ENCODE measurements at regions of chr3 and their contacts with region 1.

Region 1: GRCh38 chr3:156151824-156152428 is 31.5 kb downstream of the KCNAB1 start:
- DNase-seq: peak; percentile 85

Region 2: GRCh38 chr3:156509189-156510174 is 357.6 kb after region 1 on chr3:
- intact Hi-C with region 1: loop called in 1 of 2 experiments (anchors 5 kb)
- DNase-seq: no peak